ENCODE measurements at regions of chr6 and their contacts with region 1.

Region 1: DNA sequence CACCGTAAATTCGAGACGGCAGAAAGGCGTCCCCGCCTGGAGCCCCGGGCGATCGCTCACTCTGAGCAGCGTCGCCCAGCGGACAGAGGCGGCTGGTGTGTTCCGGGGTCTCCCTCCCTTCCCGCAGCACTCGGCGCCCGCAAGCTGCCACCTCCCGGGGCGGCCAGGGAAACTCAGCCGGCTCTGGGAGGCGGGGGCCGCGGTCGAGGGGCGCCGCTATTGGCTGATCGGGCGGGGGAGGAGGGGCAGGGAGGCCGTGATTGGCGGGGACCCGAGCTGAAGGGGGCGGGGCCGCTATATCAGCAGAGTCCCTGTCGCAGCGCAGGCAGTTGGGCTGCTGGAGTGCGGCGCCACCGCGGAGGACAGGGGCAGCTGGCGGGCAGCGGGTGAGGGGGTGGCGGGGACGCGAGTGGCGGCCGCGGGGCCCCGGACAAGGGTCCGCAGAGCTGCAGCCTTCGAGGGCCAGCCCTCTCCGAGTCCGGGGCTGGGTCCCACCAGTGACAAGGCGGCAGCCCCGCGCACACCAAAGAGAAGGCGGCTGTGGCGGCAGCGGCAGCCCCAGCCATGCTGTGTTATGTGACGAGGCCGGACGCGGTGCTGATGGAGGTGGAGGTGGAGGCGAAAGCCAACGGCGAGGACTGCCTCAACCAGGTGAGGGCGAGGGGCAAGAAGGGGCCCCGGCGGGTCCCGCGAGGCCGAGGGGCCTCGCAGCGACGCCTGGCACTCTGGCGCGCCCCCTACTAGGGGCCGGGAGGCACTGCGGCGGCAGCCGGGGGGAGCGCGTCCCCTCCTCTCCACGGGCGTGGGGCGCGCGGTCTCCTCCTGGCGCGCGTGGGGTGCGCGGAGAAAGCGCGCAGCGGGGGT is at the start of gene MYLIP:
- DNase-seq: peak; percentile 98
- ATAC-seq: peak; percentile 76 to 81
- H3K4me3 ChIP-seq: peak within 1 kb of the TSS; percentile 92 to 99 (median 95)
- H3K27ac ChIP-seq: peak within 1 kb of the TSS; percentile 98 to 100 (median 99)
- H3K4me1 ChIP-seq: peaks cover 42 to 43% of the 10 kb centered on the region in 2 donors
- H3K27me3 ChIP-seq: no peaks in the 10 kb centered on the region
- CTCF ChIP-seq: peak; percentile 77 to 93 (median 78)
- POLR2A ChIP-seq: peak; percentile 100
- total RNA-seq, gene MYLIP: 8.9 to 28.6 (median 18.3) TPM

Region 2: DNA sequence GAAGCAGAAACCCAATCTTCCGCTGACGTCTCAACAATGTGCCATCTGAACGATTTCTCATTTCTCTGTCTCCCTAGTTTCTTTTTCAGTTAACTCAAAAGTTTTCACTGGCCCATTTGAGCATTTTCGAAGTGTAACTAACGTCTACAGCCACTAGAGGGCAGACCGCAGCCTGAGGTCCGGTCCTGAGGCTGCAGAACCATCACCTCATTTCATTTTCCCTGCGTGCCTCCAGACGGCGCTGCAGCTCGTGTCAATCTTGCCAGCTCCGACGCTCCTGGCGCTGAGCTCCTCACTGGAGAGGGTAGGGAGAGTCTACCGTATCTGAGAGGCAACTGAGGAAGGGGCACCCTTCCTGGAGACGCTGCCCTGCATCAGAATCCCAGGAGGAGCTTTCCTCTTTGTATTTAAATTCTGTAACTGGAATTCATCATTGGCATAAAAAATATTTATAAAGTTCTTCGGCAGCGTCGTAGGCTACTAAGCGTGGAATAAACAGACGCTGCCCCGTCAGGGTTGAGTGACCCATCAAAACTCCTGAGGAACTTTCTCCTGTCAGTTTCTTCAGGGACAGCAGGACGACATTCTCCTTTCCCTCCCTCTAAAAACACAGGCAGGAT is 437.6 kb before region 1 on chr6:
- in situ Hi-C with region 1: no loop called
- intact Hi-C with region 1: loop called (anchors 1 kb)
- DNase-seq: peak; percentile 80 to 84
- ATAC-seq: peak; percentile 95 to 98
- H3K4me3 ChIP-seq: peak overlapping the region; percentile 55 to 62 (median 56)
- H3K27ac ChIP-seq: peak overlapping the region; percentile 66 to 77 (median 71)
- H3K4me1 ChIP-seq: peaks cover 13% of the 10 kb centered on the region in 2 donors
- H3K27me3 ChIP-seq: no peaks in the 10 kb centered on the region
- CTCF ChIP-seq: peak; percentile 98 to 100 (median 98)
- POLR2A ChIP-seq: no peak

Region 3: GRCh38 chr6:15793288-15793687 is 335.7 kb before region 1 on chr6:
- in situ Hi-C with region 1: no loop called
- intact Hi-C with region 1: loop called (anchors 5 kb)
- DNase-seq: peak; percentile 67 to 75
- ATAC-seq: peak; percentile 94 to 96
- H3K4me3 ChIP-seq: no peak overlapping the region
- H3K27ac ChIP-seq: peak overlapping the region; percentile 65 to 83 (median 78)
- H3K4me1 ChIP-seq: peaks cover 57 to 61% of the 10 kb centered on the region in 2 donors
- H3K27me3 ChIP-seq: no peaks in the 10 kb centered on the region
- CTCF ChIP-seq: no peak
- POLR2A ChIP-seq: no peak

Region 4: DNA sequence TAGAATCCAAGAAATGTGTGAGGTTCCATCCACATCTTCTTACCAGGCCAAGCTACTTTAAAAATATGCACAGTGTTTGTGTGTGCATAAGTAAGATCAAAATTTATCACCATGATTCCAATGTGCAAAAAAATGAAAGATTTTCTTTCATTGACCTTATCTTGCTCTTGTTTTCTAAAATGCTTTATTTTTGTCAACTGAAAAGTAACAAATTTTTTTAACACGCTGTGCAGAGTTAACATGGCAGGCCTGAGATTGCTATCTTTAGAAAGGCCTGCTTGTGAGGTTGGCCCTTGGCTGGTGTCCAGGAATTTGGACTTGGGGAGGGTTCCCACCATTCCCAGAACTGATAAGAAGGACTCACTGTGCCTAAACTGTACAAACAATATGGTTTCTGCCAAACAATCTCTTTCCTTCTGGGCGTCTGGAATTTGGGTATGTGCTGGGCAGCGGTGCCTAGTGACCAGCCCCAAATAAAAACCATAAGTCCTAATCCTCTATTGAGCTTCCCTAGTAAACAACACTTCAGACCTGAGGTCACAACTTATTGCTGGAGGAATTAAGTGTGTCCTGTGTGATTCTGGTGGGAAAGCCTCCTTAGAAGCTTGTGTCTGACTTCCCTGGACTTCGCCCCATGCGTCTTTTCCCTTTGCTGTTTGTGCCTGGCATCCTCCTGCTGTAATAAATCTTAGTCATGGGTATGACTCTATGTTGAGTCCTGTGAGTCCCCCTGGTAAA is 19.9 kb before region 1 on chr6:
- in situ Hi-C with region 1: no loop called
- intact Hi-C with region 1: loop called (anchors 2 kb)
- DNase-seq: no peak
- ATAC-seq: peak; percentile 18 to 47
- H3K4me3 ChIP-seq: no peak overlapping the region
- H3K27ac ChIP-seq: peak overlapping the region; percentile 71 to 85 (median 82)
- H3K4me1 ChIP-seq: peaks cover 56% of the 10 kb centered on the region in 2 donors
- H3K27me3 ChIP-seq: no peaks in the 10 kb centered on the region
- CTCF ChIP-seq: no peak
- POLR2A ChIP-seq: no peak

Region 5: GRCh38 chr6:16238057-16238962 is 109.3 kb after region 1 on chr6 and contains the start of gene GMPR:
- in situ Hi-C with region 1: no loop called
- intact Hi-C with region 1: loop called (anchors 5 kb)
- DNase-seq: peak; percentile 81 to 91
- ATAC-seq: peak; percentile 28 to 39
- H3K4me3 ChIP-seq: peak within 1 kb of the TSS; percentile 71 to 88 (median 81)
- H3K27ac ChIP-seq: peak within 1 kb of the TSS; percentile 97 to 99 (median 98)
- H3K4me1 ChIP-seq: peaks cover 46 to 49% of the 10 kb centered on the region in 2 donors
- H3K27me3 ChIP-seq: no peaks in the 10 kb centered on the region
- CTCF ChIP-seq: peak in 2 of 5 experiments; percentile 22 to 32
- POLR2A ChIP-seq: peak; percentile 79 to 87
- total RNA-seq, gene GMPR: 109 to 266 (median 239) TPM